ENCODE measurements at regions of chr13 and their contacts with region 1.

Region 1: GRCh38 chr13:77565635-77566034 is 30.1 kb downstream of the SCEL start:
- DNase-seq: no peak
- H3K4me3 Mint-ChIP-seq: no peak overlapping the region
- H3K27ac Mint-ChIP-seq: no peak overlapping the region
- H3K4me1 Mint-ChIP-seq: no peaks in the 10 kb centered on the region
- H3K27me3 Mint-ChIP-seq: peaks cover 8% of the 10 kb centered on the region

Region 2: GRCh38 chr13:77184455-77184854 is 381.2 kb before region 1 on chr13:
- intact Hi-C with region 1: loop called (anchors 5 kb)
- DNase-seq: no peak
- H3K4me3 Mint-ChIP-seq: no peak overlapping the region
- H3K27ac Mint-ChIP-seq: peak overlapping the region; percentile 49
- H3K4me1 Mint-ChIP-seq: peaks cover 23% of the 10 kb centered on the region
- H3K27me3 Mint-ChIP-seq: no peaks in the 10 kb centered on the region

Region 3: GRCh38 chr13:77492982-77493381 is 72.7 kb before region 1 on chr13:
- intact Hi-C with region 1: loop called (anchors 1 kb)
- DNase-seq: no peak
- H3K4me3 Mint-ChIP-seq: no peak overlapping the region
- H3K27ac Mint-ChIP-seq: no peak overlapping the region
- H3K4me1 Mint-ChIP-seq: no peaks in the 10 kb centered on the region
- H3K27me3 Mint-ChIP-seq: peaks cover 6% of the 10 kb centered on the region

Region 4: DNA sequence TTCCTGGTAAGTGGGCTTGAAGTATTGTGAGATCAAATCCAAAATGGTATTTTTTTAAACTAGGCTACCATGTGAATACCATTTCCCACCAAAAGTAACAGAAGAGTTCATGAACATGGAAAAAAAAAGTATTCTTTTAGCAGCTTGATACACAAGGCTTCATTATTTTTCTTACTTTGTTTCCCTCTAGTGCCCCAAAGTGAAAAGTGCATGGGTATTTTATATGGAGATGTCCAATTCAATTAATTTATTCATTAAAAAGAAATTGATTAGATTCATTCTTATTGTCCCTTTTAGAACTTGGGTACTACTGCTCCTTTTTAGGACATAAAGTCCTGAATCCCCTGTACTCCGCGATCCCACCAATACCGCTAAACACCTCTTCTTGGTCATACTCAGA is 58.8 kb before region 1 on chr13:
- intact Hi-C with region 1: no loop called
- DNase-seq: no peak
- H3K4me3 Mint-ChIP-seq: no peak overlapping the region
- H3K27ac Mint-ChIP-seq: no peak overlapping the region
- H3K4me1 Mint-ChIP-seq: peaks cover 22% of the 10 kb centered on the region
- H3K27me3 Mint-ChIP-seq: no peaks in the 10 kb centered on the region

Measured in activated T-helper 1 cell treated with anti-CD3 and anti-CD28 coated beads, Interleukin-12 subunit alpha, Interleukin-12 subunit beta, Interleukin-2, Interleukin-4 antibody, amounts not matched to agents 30 ng/mL and 10 ng/mL and 1 ng/mL, durations not matched to agents 14 hours and 24 hours and 36 hours (primary cell).